ENCODE measurements at regions of chr3 and their contacts with region 1.

Region 1: GRCh38 chr3:14847613-14848541 is 29.1 kb downstream of the FGD5 start:
- DNase-seq: peak; percentile 81
- ATAC-seq: peak; percentile 55 to 73

Region 2: DNA sequence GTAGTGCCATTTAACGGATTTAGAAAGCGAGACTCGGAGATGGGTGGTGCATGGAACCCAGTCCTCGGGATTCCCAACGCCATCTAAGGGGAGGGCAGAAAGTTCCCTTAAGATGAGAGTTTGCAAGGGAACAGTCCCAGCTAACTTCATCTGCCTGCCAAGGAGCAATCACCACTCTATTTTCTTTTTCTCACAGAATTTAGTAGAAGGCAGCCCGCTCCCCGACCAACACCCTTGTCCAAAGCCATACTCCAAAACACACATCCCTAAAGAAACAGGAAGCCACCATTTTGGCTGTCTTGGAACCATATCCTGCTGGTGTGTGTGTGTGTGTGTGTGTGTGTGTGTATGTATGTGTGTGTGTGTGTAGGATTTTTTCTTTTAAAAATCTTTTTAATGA is 36.2 kb before region 1 on chr3:
- intact Hi-C with region 1: loop called in 1 of 2 experiments (anchors 1 kb)
- DNase-seq: no peak
- ATAC-seq: peak; percentile 24 to 43